ENCODE measurements at regions of chr2 and their contacts with region 1.

Region 1: DNA sequence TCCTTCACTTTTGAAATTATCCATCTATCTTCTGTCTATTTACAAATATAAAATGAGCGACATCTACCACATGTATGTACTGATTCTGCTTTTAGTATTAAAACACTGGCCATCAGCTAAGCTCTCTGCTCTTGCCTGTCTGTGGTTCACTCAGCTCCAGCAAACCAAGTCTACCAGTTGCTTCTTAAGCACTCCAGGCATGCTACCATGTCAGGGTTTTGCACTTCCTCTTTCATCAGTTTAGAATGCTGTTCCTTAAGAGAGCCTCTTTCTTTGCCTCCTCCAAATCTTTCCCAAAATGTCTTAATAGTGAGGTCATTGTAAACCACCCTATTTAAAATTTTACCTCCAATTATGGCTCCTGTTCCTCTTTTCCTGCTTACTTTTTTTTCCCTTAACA is 59.5 kb downstream of the SCN3A start:
- DNase-seq: no peak
- ATAC-seq: no peak
- H3K4me3 ChIP-seq: no peak overlapping the region
- H3K27ac ChIP-seq: no peak overlapping the region
- H3K4me1 ChIP-seq: no peaks in the 10 kb centered on the region
- H3K27me3 ChIP-seq: 0 out of 2 replicates have a peak, but pooled peaks cover 6% of the 10 kb centered on the region
- CTCF ChIP-seq: no peak

Region 2: GRCh38 chr2:164859251-164859800 is 285.0 kb before region 1 on chr2:
- CTCF ChIA-PET with region 1: no interaction called
- POLR2A ChIA-PET with region 1: no interaction called
- intact Hi-C with region 1: no loop called
- DNase-seq: no peak
- ATAC-seq: no peak
- H3K4me3 ChIP-seq: no peak overlapping the region
- H3K27ac ChIP-seq: no peak overlapping the region
- H3K4me1 ChIP-seq: no peaks in the 10 kb centered on the region
- H3K27me3 ChIP-seq: peaks cover 9% of the 10 kb centered on the region; the same call in 1 of the 2 replicates
- CTCF ChIP-seq: no peak

Region 3: DNA sequence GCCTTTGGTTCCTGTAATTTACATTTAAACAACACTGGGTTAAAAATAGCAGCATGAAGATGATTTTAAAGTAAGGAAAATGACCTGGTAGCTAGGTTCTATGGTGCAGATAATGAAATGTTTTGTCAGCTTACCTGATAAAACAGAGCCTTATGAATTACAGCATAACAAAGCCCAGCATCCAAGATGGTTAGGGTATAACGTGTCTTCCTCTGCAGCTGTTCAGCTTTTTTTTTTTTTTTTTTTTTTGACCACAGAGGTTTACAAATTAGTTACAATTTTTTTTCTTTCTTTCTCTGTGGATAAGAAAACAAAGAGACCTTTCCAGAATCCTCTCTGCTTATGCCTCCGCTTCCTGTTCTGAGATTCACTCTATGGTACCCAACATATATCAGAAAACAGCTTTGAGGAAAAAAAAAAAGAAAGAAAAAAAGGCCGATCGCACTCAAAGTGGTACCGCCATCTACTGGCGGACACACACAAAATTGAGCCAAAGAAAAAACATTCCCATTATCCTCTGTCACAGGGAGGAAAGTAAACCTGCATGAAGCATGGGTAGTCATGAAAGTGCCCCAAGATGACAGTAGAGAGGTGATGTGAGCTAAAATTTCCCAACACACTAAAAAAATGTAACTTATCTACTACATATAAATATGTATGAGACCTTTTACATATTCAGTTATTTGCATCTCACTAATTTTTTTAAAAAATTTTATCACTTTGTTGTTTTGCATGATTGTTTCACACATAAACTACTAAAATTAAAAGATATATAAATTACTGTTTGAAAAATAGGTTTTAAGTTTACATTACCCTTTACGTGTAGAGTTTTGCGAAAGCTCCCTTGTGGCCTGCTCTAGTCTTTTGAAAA is 59.6 kb after region 1 on chr2 and contains the start of gene SCN3A:
- CTCF ChIA-PET with region 1: interaction called, 6 read pairs
- POLR2A ChIA-PET with region 1: no interaction called
- intact Hi-C with region 1: loop called (anchors 1 kb)
- DNase-seq: peak; percentile 71
- ATAC-seq: peak; percentile 57
- H3K4me3 ChIP-seq: no peak within 1 kb of the TSS
- H3K27ac ChIP-seq: no peak within 1 kb of the TSS
- H3K4me1 ChIP-seq: no peaks in the 10 kb centered on the region
- H3K27me3 ChIP-seq: peaks cover 22% of the 10 kb centered on the region
- CTCF ChIP-seq: peak; percentile 83
- total RNA-seq, gene SCN3A: 0.07 and 0.12 TPM in 2 replicates